Colonic mucosa (tissue), 4 donors: ENCODE measurements at regions of chr20 and their contacts with region 1.

Region 1: GRCh38 chr20:12970372-12970821 is 38.4 kb upstream of the SPTLC3 start:
- DNase-seq: no peak
- H3K4me3 ChIP-seq: no peak overlapping the region
- H3K27ac ChIP-seq: no peak overlapping the region
- H3K4me1 ChIP-seq: no peaks in the 10 kb centered on the region
- H3K27me3 ChIP-seq: no peaks in the 10 kb centered on the region
- CTCF ChIP-seq: peak; percentile 50

Region 2: GRCh38 chr20:13105864-13106457 is 135.6 kb after region 1 on chr20:
- intact Hi-C with region 1: loop called (anchors 2 kb)
- DNase-seq: no peak
- H3K4me3 ChIP-seq: no peak overlapping the region
- H3K27ac ChIP-seq: no peak overlapping the region
- H3K4me1 ChIP-seq: no peaks in the 10 kb centered on the region
- H3K27me3 ChIP-seq: no peaks in the 10 kb centered on the region
- CTCF ChIP-seq: peak; percentile 55